ENCODE measurements at regions of chr9 and their contacts with region 1.

Region 1: DNA sequence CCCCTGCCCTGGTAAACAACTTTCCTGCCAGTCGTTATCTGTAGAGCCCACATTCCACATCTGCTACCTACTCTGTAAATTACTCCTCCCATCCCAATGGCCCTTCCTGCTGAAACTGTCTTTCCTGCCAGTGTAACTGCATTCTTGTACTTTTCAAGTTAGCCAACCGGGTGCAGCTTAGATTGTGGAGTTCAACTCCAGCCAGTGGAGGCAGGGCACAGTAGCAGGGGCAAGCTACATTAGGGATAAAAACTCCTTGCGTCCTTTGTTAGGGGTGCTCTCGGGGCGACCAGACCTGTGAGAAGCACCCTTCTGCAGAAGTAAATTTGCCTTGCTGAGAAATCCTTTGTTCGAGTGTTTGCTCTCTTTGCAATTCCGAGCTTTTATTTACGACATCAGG is 639.0 kb upstream of the TYRP1 start:
- DNase-seq: no peak

Region 2: GRCh38 chr9:10112798-10113197 is 1941.4 kb before region 1 on chr9:
- intact Hi-C with region 1: loop called in 1 of 2 experiments (anchors 10 kb)
- DNase-seq: no peak

Region 3: DNA sequence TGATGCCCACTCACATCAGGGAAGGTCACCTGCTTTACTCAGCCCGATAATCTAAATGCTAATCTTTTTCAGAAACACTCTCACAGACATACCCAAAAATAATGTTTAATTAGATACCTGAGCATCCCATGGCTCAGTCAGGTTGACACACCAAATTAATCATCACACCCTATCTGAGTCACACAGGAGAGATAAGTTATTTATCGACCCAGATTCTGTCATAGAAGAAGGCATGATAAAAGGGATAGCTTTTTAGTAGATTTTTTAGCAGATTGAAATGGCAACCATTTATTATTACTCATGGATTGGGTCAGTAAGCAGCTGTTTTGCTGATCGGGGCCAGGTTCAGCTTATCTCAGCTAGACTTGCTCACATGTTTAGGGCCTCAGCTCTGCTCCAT is 541.2 kb after region 1 on chr9:
- intact Hi-C with region 1: loop called in 1 of 2 experiments (anchors 10 kb)
- DNase-seq: no peak